Activated CD4-positive, alpha-beta memory T cell treated with anti-CD3 and anti-CD28 coated beads for 36 hours (primary cell): ENCODE measurements at regions of chr10 and their contacts with region 1.

Region 1: DNA sequence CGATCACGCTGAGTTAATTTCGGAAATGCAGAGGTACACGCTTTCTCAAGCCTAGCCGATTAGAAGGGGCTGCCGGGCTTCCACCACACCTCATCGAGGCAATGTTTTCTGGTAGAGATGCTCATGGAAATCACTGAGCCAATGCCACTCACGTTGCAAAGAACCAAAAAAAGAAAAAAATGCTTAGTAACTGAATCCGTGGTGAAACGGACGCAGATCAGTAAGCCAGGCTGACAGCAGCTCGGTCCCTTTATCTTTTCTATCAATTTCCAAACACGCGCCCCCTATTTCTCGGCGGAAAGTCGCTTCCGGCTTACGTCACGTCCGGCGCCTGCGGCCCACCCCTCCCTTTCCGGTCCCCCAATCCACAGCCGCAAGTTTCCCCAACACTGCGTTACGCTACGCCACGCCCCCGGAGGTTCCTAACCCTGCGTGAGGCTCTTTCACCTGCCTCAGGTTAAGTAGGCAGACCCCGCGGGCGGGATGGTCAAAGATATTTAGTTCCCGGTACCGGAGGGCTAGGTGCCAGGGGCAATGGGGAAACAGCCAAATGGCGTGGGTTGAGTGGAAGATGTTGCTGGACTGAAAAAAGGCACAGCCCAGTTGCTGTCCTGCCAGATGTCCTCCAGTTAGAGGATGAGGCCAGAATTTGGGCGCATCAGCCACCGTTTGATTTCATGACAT is at the start of gene NSUN6:
- DNase-seq: peak; percentile 96
- H3K4me3 Mint-ChIP-seq: peak within 1 kb of the TSS; percentile 89
- H3K27ac Mint-ChIP-seq: peak within 1 kb of the TSS; percentile 93
- H3K4me1 Mint-ChIP-seq: peaks cover 32% of the 10 kb centered on the region
- H3K27me3 Mint-ChIP-seq: no peaks in the 10 kb centered on the region
- total RNA-seq, gene NSUN6: 12.6 to 15.0 TPM

Region 2: GRCh38 chr10:17029581-17030271 is 1621.7 kb before region 1 on chr10:
- CTCF ChIA-PET with region 1: no interaction called
- POLR2A ChIA-PET with region 1: no interaction called
- intact Hi-C with region 1: loop called (anchors 5 kb)
- DNase-seq: peak; percentile 93
- H3K4me3 Mint-ChIP-seq: peak overlapping the region; percentile 69
- H3K27ac Mint-ChIP-seq: peak overlapping the region; percentile 85
- H3K4me1 Mint-ChIP-seq: peaks cover 69% of the 10 kb centered on the region
- H3K27me3 Mint-ChIP-seq: no peaks in the 10 kb centered on the region

Region 3: DNA sequence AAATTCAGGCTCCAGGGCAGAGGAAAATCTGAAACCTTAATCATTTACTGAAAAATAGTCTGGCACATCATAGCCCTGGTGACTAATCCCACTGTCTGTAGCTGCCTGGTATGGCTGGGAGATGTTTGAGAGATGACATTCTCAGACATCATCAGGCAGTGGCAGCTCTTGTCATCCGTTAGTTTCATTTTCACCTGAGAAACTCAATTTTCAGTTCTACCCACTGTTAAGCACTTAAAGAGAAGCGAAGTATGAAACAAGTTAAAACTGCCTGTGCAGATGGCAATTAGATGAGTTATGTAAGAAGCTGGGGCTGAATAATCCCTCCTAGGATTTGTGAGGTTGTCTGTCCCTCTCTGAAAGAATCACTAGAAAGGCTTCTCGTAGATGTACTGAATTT is 150.3 kb before region 1 on chr10:
- CTCF ChIA-PET with region 1: no interaction called
- POLR2A ChIA-PET with region 1: no interaction called
- intact Hi-C with region 1: loop called (anchors 2 kb)
- DNase-seq: peak; percentile 18
- H3K4me3 Mint-ChIP-seq: no peak overlapping the region
- H3K27ac Mint-ChIP-seq: no peak overlapping the region
- H3K4me1 Mint-ChIP-seq: peaks cover 10% of the 10 kb centered on the region
- H3K27me3 Mint-ChIP-seq: peaks cover 1% of the 10 kb centered on the region

Region 4: DNA sequence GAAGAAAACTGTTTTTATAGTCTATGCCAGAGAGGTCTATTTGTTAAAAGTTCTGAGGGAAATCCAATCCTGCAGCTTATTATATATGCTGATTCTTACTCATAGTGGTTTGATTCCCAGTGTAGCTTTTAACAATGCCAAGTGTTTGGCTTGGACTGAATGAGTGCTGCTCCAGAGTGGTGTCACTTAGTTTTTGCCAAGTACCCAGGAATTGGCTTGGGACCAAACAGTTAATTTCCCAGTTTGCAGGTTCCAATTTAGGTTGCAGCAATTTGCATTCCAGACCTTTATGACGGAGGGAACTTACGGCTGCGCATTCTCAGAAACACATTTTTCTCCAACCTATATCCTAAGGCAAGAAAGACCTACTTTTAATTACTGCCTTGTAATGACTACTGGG is 32.5 kb before region 1 on chr10:
- CTCF ChIA-PET with region 1: no interaction called
- POLR2A ChIA-PET with region 1: no interaction called
- intact Hi-C with region 1: loop called (anchors 2 kb)
- DNase-seq: no peak
- H3K4me3 Mint-ChIP-seq: no peak overlapping the region
- H3K27ac Mint-ChIP-seq: no peak overlapping the region
- H3K4me1 Mint-ChIP-seq: peaks cover 18% of the 10 kb centered on the region
- H3K27me3 Mint-ChIP-seq: no peaks in the 10 kb centered on the region

Region 5: GRCh38 chr10:18625886-18626285 is 25.6 kb before region 1 on chr10:
- CTCF ChIA-PET with region 1: no interaction called
- POLR2A ChIA-PET with region 1: no interaction called
- intact Hi-C with region 1: loop called (anchors 2 kb)
- DNase-seq: no peak
- H3K4me3 Mint-ChIP-seq: no peak overlapping the region
- H3K27ac Mint-ChIP-seq: no peak overlapping the region
- H3K4me1 Mint-ChIP-seq: peaks cover 7% of the 10 kb centered on the region
- H3K27me3 Mint-ChIP-seq: no peaks in the 10 kb centered on the region